Heart right ventricle (tissue), 16 donors: ENCODE measurements at regions of chr14 and their contacts with region 1.

Region 1: DNA sequence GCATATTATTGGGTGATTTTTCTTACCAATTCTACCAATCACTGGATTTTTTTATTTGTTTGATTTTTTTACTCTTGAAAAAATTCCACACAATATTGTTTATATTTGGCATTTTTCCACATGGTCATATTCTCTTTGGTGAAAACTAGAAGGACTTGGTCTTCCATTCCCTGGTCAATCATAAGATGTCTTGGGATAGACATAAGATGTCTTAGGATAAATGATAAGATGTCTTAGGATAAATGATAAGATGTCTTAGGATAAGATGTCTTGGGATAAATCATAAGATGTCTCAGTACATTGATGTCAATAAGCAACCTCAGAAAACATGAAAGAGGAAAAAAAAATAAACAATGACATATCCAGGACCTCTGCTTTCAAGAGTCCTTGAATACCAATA is 309.1 kb downstream of the LRFN5 start:
- DNase-seq: no peak
- ATAC-seq: no peak
- H3K4me3 ChIP-seq: no peak overlapping the region
- H3K27ac ChIP-seq: no peak overlapping the region
- H3K4me1 ChIP-seq: no peaks in the 10 kb centered on the region
- H3K27me3 ChIP-seq: no peaks in the 10 kb centered on the region
- CTCF ChIP-seq: no peak

Region 2: GRCh38 chr14:41817626-41818025 is 98.1 kb before region 1 on chr14:
- intact Hi-C with region 1: no loop called
- DNase-seq: no peak
- ATAC-seq: no peak
- H3K4me3 ChIP-seq: no peak overlapping the region
- H3K27ac ChIP-seq: no peak overlapping the region
- H3K4me1 ChIP-seq: no peaks in the 10 kb centered on the region
- H3K27me3 ChIP-seq: no peaks in the 10 kb centered on the region
- CTCF ChIP-seq: no peak

Region 3: DNA sequence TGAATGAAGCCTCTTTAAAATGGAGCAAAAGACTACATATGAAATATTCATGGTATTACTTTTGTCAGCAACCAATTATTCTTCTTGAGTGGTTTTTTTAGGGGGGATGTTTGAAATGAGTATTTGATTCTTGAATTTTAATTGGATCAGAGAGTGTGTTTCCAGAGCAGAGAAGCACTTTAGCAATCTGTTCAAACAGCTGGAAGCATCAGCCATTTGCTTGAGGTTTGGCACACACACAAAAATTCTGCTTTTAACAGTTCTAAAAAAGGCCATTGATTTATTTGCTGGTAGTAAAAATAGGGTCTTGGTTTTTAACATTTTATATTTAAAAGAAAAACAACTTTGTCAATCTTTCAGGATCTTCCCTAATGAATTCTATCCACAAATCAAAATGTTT is 16.3 kb before region 1 on chr14:
- intact Hi-C with region 1: loop called in 1 of 10 experiments (anchors 1 kb)
- DNase-seq: no peak
- ATAC-seq: no peak
- H3K4me3 ChIP-seq: no peak overlapping the region
- H3K27ac ChIP-seq: no peak overlapping the region
- H3K4me1 ChIP-seq: no peaks in the 10 kb centered on the region
- H3K27me3 ChIP-seq: no peaks in the 10 kb centered on the region
- CTCF ChIP-seq: no peak